Left lung (tissue), 14 donors: ENCODE measurements at regions of chr11 and their contacts with region 1.

Region 1: GRCh38 chr11:122209619-122210366 is 93.8 kb upstream of the BLID start:
- DNase-seq: peak in 2 of 4 donors; percentile 53 to 77
- ATAC-seq: peak; percentile 46
- H3K4me3 ChIP-seq: no peak overlapping the region
- H3K27ac ChIP-seq: peak overlapping the region; percentile 2 to 28
- H3K4me1 ChIP-seq: peaks cover 5 to 31% of the 10 kb centered on the region in 2 donors
- H3K27me3 ChIP-seq: no peaks in the 10 kb centered on the region
- CTCF ChIP-seq: no peak

Region 2: GRCh38 chr11:121655537-121656327 is 554.1 kb before region 1 on chr11:
- intact Hi-C with region 1: loop called in 1 of 2 experiments (anchors 5 kb)
- DNase-seq: peak; percentile 88 to 95 (median 91)
- ATAC-seq: peak; percentile 98
- H3K4me3 ChIP-seq: peak overlapping the region; percentile 19 to 39
- H3K27ac ChIP-seq: peak overlapping the region; percentile 72 to 87
- H3K4me1 ChIP-seq: peaks cover 0 to 20% of the 10 kb centered on the region in 2 donors
- H3K27me3 ChIP-seq: no peaks in the 10 kb centered on the region
- CTCF ChIP-seq: peak; percentile 73 to 75